ENCODE measurements at regions of chr5 and their contacts with region 1.

Region 1: DNA sequence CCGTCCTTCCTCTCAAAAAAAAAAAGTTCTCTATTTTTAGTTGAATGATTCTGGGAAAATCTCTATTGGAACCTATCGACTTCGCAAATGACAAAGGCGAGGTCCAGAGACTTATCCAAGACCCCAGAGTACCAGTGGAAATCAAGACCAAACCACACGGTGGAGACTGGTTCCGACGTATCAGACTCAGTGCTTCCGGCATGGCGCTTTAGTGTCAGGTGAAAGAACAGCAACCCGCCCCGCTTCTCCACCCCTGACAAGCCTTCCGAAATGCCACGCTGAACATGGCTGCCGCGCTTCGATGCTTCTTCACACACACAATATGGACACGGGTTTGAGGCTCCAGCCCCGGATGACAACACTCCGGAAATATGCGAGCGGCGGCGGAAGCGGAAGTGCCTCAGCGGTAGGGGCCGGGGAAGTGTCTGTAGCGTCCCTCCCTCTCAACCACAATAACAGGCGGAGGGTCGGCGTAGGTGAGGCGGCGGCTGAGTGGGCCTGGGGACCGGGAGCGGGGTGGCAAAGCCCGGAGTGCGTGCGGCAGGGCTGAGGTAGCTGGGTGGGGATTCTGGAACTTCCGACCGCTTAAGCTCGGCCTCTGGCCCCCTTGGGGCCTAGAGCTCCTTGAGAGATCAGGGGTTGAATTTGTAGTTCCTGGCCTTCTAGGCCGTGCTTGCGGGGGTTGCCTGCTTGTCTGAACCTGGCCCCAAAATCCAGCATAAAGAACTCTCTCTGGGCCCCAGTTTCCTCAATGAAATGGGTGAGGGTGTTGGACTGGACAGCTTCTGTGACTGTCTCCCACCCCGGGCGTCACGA is at the start of gene FBXO38:
- DNase-seq: peak; percentile 92 to 94
- H3K4me3 ChIP-seq: peak within 1 kb of the TSS; percentile 86 to 93 (median 88)
- H3K27ac ChIP-seq: peak within 1 kb of the TSS; percentile 81
- H3K4me1 ChIP-seq: peaks cover 0 to 3% (median 0%) of the 10 kb centered on the region in 4 experiments; a peak in 4 of 7 replicates
- H3K27me3 ChIP-seq: no peaks in the 10 kb centered on the region
- CTCF ChIP-seq: peak in 1 of 3 experiments; percentile 8; a peak in 2 of 4 replicates
- EP300 ChIP-seq: no peak
- POLR2A ChIP-seq: peak; percentile 90 to 97
- RAD21 ChIP-seq: peak in 1 of 2 experiments; percentile 23; a peak in 2 of 4 replicates
- total RNA-seq, gene FBXO38: 31.5 and 34.3 TPM in 2 replicates

Region 2: DNA sequence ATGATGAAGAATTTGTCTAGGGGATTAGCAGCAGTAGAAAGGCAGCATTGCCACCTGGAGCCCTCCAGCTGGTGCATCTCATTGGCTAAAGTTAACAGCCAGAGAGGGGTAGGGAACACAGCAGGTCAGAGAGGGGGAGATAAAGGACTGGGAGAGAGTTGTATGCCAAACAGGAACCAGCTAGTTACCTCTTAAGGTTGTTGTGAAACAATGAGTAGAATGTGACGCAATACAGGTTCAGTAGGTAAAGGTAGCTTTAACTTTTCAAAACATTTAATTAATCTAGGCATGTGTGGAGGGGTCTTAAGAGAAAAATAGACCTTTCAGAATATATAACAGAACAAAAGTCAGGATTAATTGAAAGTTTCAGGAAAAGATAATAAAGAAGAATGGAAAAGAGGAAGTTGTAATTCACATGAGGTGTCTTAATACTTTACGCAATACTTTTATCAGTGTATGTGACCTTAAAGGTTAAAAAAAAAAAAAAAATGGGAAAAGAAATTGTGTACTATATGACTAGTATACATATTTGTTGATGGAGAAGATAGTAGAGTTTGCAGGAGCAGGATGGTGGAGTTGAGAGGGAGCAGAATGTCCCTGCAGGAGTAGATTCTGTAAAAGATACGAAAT is 14.3 kb after region 1 on chr5:
- CTCF ChIA-PET with region 1: interaction called, 14 read pairs
- POLR2A ChIA-PET with region 1: interaction called, 16 read pairs
- DNase-seq: peak; percentile 48 to 61
- H3K4me3 ChIP-seq: peak overlapping the region in 1 of 4 experiments; percentile 27; a peak in 1 of 8 replicates
- H3K27ac ChIP-seq: peak overlapping the region; percentile 58
- H3K4me1 ChIP-seq: peaks cover 0 to 17% (median 6%) of the 10 kb centered on the region in 4 experiments; a peak in 4 of 7 replicates
- H3K27me3 ChIP-seq: no peaks in the 10 kb centered on the region
- CTCF ChIP-seq: no peak
- EP300 ChIP-seq: peak in 1 of 2 experiments; percentile 73; a peak in 1 of 3 replicates
- POLR2A ChIP-seq: peak in 1 of 2 experiments; percentile 48; a peak in 1 of 3 replicates
- RAD21 ChIP-seq: 0 out of 4 replicates have a peak, but pooled peaks of 1 of the 2 experiments have one; percentile 18

Measured in H1 (cell line).